HepG2 (cell line): ENCODE measurements at regions of chr13 and their contacts with region 1.

Region 1: GRCh38 chr13:50801087-50801931 is 42.2 kb downstream of the DLEU7 start:
- DNase-seq: peak; percentile 57
- ATAC-seq: peak; percentile 99
- H3K4me3 ChIP-seq: no peak overlapping the region
- H3K27ac ChIP-seq: no peak overlapping the region
- H3K4me1 ChIP-seq: no peaks in the 10 kb centered on the region
- H3K27me3 ChIP-seq: no peaks in the 10 kb centered on the region
- CTCF ChIP-seq: peak; percentile 92
- EP300 ChIP-seq: no peak
- POLR2A ChIP-seq: no peak
- RAD21 ChIP-seq: peak; percentile 70

Region 2: DNA sequence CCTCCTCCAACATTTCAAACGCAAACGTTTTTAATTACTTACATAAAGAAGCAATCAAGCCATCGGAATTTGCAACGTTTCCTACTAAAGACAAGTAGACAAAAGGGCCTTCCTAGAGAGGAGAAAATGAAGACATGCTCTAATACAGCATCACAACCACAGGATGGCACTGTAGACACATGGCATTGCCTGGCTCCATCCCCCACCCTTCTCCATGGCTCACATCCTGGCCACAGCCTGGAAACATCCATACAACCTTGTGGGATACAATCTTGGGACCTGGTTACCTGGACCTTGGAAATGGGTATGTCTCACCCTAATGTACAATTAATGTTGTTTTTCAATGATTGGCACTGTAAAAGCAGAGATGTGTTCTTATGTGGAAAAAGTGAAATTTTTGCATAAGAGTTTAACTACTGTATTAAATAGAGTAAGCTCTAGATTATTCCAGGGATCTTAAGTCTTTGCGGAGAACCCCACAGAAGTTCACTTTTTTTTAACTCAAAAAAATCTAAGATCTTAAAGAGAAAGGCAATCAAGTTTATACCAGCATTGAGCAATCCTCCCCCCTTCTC is 1131.5 kb before region 1 on chr13:
- CTCF ChIA-PET with region 1: no interaction called
- POLR2A ChIA-PET with region 1: no interaction called
- in situ Hi-C with region 1: loop called (anchors 25 kb)
- intact Hi-C with region 1: no loop called
- DNase-seq: peak; percentile 60
- ATAC-seq: peak; percentile 96
- H3K4me3 ChIP-seq: no peak overlapping the region
- H3K27ac ChIP-seq: no peak overlapping the region
- H3K4me1 ChIP-seq: no peaks in the 10 kb centered on the region
- H3K27me3 ChIP-seq: no peaks in the 10 kb centered on the region
- CTCF ChIP-seq: peak; percentile 81
- EP300 ChIP-seq: no peak
- POLR2A ChIP-seq: no peak
- RAD21 ChIP-seq: peak; percentile 84

Region 3: DNA sequence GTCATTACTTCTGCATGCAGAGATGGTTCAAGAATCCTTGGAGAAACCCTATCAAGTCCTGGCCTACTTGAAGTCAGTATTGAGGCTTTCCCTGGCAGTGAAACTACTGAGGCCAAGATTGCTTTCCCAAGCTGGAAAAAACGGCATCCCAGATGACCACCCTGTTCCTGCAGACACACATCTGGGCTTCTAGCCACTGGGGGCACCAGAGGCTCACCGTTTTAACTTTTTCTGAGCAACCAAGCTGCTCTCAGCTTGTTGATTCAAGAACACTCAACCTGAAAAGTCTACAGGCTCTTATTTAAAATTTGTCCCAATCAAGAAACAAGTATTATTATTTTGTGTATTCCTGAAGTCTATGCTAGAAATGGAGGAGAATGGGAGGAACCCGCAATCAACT is 931.8 kb before region 1 on chr13:
- CTCF ChIA-PET with region 1: no interaction called
- POLR2A ChIA-PET with region 1: no interaction called
- in situ Hi-C with region 1: no loop called
- intact Hi-C with region 1: loop called (anchors 2 kb)
- DNase-seq: peak; percentile 53
- ATAC-seq: peak; percentile 94
- H3K4me3 ChIP-seq: no peak overlapping the region
- H3K27ac ChIP-seq: no peak overlapping the region
- H3K4me1 ChIP-seq: no peaks in the 10 kb centered on the region; the same call in 1 of the 2 replicates
- H3K27me3 ChIP-seq: no peaks in the 10 kb centered on the region
- CTCF ChIP-seq: peak; percentile 57
- EP300 ChIP-seq: no peak
- POLR2A ChIP-seq: no peak
- RAD21 ChIP-seq: peak; percentile 43; the same call in 1 of the 2 replicates

Region 4: DNA sequence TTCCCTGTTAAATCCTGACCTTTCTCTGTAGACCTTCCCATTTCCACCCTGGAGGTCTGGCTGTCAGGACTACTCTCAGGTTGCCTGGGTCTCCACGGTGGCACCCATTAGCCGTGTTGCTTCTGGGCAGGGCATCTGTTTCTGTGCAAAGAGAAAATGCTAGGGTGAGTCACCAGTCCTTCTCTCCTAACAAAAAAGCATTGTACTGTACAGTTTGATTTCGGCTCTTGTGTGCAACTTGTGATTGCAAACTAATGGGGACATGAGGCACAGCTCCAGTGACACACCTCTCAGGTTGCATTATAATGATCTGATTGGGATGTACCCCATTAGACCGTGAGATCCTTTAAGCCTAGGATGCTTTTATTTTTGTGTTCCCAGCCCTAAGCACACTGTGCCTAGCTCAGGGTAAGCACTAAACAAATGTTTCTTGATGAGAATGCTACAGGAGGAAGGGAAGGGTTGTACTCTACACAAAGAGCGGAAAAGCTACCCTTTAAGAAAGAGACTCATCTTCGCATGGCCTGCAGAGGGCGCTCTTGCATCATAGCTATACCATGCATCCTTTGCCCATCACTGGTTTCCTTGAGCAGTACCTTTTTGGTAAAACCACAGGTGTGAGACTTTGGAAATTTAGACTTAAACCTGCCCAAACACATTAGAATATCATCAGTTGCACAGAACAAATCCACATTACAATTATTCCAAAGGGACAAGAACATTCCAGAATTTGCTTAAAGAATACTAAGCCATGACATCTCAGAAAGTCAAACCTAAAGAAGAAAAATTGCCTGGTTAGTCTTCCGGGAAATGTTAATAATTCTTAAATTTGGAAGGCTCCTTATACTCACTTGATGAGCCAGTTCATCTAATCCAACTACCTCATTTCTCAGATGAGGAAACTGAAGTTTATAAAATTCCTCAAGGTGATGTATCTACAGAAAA is 824.7 kb before region 1 on chr13:
- CTCF ChIA-PET with region 1: interaction called, 3 read pairs
- POLR2A ChIA-PET with region 1: no interaction called
- in situ Hi-C with region 1: loop called (anchors 10 kb)
- intact Hi-C with region 1: loop called (anchors 2 kb)
- DNase-seq: peak; percentile 65
- ATAC-seq: peak; percentile 87
- H3K4me3 ChIP-seq: peak overlapping the region in 1 of 3 experiments; percentile 4; a peak in 1 of 6 replicates
- H3K27ac ChIP-seq: no peak overlapping the region
- H3K4me1 ChIP-seq: peaks cover 24% of the 10 kb centered on the region
- H3K27me3 ChIP-seq: no peaks in the 10 kb centered on the region
- CTCF ChIP-seq: peak; percentile 94
- EP300 ChIP-seq: no peak
- POLR2A ChIP-seq: no peak
- RAD21 ChIP-seq: peak; percentile 81

Region 5: DNA sequence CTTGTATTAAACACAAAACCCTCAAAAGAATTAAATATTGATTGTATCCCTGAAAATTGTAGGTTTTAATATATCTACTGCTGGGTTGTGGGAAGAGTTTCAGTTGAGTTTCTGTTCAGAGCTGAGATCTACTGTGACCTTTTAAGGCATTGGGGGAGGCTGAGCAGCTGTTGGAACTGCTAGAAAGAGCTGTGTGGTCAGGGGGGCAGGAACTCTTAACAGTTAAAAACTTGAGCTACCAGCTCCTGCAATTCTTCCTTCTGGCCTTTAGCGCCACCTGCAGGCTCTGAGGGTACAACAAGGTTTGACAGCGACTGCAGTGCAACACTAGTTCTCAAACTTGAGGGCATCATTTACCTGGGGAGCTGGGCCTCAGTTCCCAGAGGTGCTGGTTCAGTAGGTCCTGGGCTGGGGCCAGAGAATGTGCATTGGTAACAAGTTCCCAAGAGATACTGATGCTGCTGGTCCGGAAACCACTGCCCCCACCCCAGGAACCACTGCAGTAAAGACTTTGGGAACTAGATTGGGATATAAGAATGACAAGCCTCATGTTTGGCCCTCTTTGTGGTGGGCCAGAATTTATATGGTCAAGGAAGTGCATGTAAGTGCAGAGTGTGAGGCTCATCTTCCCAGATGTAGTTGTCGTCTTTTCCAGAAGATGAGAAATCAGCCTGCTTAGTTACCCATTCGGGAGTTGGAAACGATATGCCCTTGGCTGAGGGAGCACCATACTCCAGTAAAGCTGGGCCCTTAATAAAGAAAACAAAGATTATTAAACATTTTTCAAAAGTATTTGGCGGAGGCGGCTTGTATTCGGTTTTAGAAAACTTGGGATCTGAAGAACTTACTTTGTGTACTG is 110.9 kb after region 1 on chr13:
- CTCF ChIA-PET with region 1: no interaction called
- POLR2A ChIA-PET with region 1: no interaction called
- in situ Hi-C with region 1: no loop called
- intact Hi-C with region 1: loop called (anchors 5 kb)
- DNase-seq: peak; percentile 68
- ATAC-seq: no peak
- H3K4me3 ChIP-seq: no peak overlapping the region
- H3K27ac ChIP-seq: no peak overlapping the region
- H3K4me1 ChIP-seq: peaks cover 28% of the 10 kb centered on the region
- H3K27me3 ChIP-seq: no peaks in the 10 kb centered on the region
- CTCF ChIP-seq: peak; percentile 88
- EP300 ChIP-seq: peak in 1 of 2 experiments; percentile 35; a peak in 1 of 4 replicates
- POLR2A ChIP-seq: no peak
- RAD21 ChIP-seq: no peak

Region 6: GRCh38 chr13:51070005-51070649 is 268.8 kb after region 1 on chr13:
- CTCF ChIA-PET with region 1: no interaction called
- POLR2A ChIA-PET with region 1: no interaction called
- in situ Hi-C with region 1: no loop called
- intact Hi-C with region 1: loop called (anchors 10 kb)
- DNase-seq: peak; percentile 44
- ATAC-seq: peak; percentile 95
- H3K4me3 ChIP-seq: no peak overlapping the region
- H3K27ac ChIP-seq: no peak overlapping the region
- H3K4me1 ChIP-seq: peaks cover 10% of the 10 kb centered on the region
- H3K27me3 ChIP-seq: peaks cover 0 to 21% of the 10 kb centered on the region in 2 experiments; a peak in 4 of 5 replicates
- CTCF ChIP-seq: peak; percentile 95
- EP300 ChIP-seq: no peak
- POLR2A ChIP-seq: no peak
- RAD21 ChIP-seq: peak; percentile 91